SK-N-SH (cell line): ENCODE measurements at regions of chr7 and their contacts with region 1.

Region 1: GRCh38 chr7:27188386-27189294 is 3.6 kb upstream of the HOXA11 start:
- DNase-seq: no peak
- H3K4me3 ChIP-seq: no peak overlapping the region
- H3K27ac ChIP-seq: no peak overlapping the region
- H3K4me1 ChIP-seq: peaks cover 4 to 10% of the 10 kb centered on the region in 2 experiments; a peak in 1 of 4 replicates
- H3K27me3 ChIP-seq: peaks cover 98% of the 10 kb centered on the region
- CTCF ChIP-seq: no peak
- EP300 ChIP-seq: no peak
- RAD21 ChIP-seq: no peak

Region 2: DNA sequence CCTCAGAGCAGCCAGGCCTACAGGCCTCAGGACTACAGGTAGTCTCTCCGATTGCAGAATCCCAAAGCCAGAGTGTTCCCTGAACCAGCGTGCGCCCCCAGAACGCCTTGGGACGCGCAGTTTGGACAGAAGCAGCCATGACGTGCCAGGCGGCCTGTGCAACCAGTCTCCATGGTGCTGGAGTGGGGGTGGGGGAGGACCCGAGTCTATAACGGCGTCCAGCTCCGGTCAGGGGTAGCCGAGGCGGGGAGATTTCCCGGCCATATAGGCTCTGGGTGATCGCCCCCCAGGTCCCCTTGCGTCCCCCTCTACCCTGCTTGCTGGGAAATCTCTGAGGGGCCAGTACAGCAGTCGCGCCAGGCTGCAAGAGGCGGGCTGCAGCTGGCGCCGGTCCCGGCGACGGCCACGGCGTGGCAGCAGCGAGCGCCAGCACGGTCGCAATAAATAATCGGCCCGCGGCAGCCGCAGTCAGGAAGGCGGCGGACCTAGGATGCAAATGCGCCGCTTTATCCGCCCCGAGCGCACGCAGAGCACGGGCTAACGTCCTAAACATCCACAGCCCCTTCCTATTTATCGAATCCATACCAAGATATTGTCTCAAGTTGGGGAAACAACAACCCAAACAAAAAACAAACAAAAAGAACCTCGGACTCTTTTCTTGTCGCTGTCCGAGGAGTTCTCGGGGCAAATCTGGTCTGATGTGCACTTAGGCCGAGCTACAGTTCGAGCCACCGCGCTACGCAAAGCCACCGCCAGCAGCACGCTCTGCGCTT is 37.9 kb before region 1 on chr7:
- CTCF ChIA-PET with region 1: interaction called, 14 read pairs
- POLR2A ChIA-PET with region 1: no interaction called
- DNase-seq: peak; percentile 96
- H3K4me3 ChIP-seq: peak overlapping the region; percentile 32 to 63
- H3K27ac ChIP-seq: no peak overlapping the region
- H3K4me1 ChIP-seq: peaks cover 0 to 9% of the 10 kb centered on the region in 2 experiments; a peak in 1 of 4 replicates
- H3K27me3 ChIP-seq: peaks cover 100% of the 10 kb centered on the region
- CTCF ChIP-seq: peak; percentile 91
- EP300 ChIP-seq: peak in 1 of 2 experiments; percentile 40; a peak in 1 of 4 replicates
- RAD21 ChIP-seq: peak; percentile 51

Region 3: DNA sequence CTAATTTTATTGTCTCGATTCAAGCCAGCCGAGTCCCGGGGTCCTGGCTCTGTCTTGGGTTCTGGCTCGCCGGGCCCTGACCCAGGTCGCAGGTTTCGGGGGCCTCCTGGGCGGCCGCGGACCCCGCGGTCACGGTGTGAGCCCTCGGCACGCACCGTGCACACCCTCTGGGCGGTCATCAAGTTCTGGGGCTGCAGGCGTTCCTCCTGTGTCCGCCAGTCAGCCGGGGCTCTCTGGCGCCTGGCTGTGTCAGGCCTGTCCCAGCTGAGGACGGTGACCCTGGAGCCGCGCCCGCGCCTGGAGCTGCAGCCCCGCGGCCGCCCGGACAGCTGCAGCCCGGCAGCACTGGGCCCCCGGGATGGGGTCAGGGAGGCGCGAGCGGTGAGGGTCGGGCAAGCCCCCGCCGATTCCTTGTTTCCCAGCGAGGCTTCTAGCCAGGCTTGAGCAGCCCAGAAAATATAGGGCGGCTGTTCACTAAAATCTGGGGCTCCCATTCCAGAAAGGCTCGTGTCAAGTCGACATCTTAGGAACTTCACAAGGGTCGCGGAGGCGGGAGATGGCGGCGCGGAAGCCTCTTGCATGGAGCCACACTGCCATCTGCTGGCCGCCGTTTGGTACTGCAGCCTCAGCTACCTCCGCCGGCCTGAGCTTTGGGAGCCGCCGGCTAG is 28.0 kb before region 1 on chr7:
- CTCF ChIA-PET with region 1: interaction called, 10 read pairs
- POLR2A ChIA-PET with region 1: no interaction called
- DNase-seq: peak; percentile 96
- H3K4me3 ChIP-seq: peak overlapping the region; percentile 39 to 70
- H3K27ac ChIP-seq: no peak overlapping the region
- H3K4me1 ChIP-seq: peaks cover 0 to 8% of the 10 kb centered on the region in 2 experiments; a peak in 1 of 4 replicates
- H3K27me3 ChIP-seq: peaks cover 91% of the 10 kb centered on the region
- CTCF ChIP-seq: peak; percentile 99
- EP300 ChIP-seq: no peak
- RAD21 ChIP-seq: peak; percentile 94

Region 4: DNA sequence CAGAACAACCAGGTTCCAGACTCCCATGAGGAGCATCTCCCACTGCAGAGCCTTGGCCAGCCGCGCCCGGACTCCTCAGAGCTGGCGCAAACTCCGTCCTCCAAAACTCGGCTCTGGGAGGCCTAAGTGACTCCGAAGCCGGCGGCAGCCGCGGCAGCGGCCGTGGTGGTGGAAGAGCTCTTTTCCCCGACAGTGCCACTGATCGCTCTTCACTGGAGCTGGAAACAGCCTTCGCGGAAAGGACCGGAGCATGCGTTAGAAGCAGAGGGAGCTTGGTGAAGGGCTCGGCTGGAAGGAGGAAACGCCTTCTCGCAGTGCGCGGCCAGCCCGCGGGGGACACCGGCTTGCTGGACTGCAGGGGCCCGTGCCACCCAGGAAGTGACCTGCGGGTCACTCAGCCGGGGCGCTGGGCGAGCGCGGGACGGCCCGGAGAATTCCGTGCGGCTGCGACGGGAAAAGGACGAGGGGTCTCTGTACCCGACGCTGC is 16.3 kb after region 1 on chr7:
- CTCF ChIA-PET with region 1: interaction called, 74 read pairs
- POLR2A ChIA-PET with region 1: no interaction called
- DNase-seq: no peak
- H3K4me3 ChIP-seq: no peak overlapping the region; a peak in 1 of 4 replicates
- H3K27ac ChIP-seq: no peak overlapping the region
- H3K4me1 ChIP-seq: peaks cover 0 to 7% of the 10 kb centered on the region in 2 experiments; a peak in 1 of 4 replicates
- H3K27me3 ChIP-seq: peaks cover 95% of the 10 kb centered on the region
- CTCF ChIP-seq: no peak
- EP300 ChIP-seq: no peak
- RAD21 ChIP-seq: no peak